ENCODE measurements at regions of chr11 and their contacts with region 1.

Region 1: DNA sequence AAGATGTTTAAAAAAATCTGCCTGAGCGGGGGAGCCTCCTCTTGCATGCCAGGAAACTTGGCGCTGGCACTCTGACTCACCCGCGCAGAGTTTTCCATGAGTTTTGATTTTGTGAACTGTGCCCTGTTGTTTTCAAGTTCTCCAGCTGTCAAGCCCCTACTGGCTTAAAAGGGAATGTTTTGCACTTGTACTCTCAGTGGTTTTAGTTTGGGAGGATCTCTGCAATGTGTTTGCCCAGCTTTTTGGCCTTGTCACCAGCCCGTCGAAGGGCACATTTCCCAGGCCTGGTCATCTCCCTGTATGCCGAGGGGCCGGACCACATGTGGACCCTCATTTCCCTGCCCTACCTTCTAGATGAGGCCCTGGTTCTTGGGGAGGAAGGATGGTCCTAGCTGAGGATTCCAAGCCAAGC is 12.2 kb downstream of the MRGPRF start:
- DNase-seq: no peak
- H3K4me3 ChIP-seq: no peak overlapping the region
- H3K27ac ChIP-seq: peak overlapping the region; percentile 82
- H3K4me1 ChIP-seq: peaks cover 72% of the 10 kb centered on the region
- H3K27me3 ChIP-seq: no peaks in the 10 kb centered on the region
- CTCF ChIP-seq: peak in 2 of 3 experiments; percentile 27 to 74
- POLR2A ChIP-seq: no peak

Region 2: DNA sequence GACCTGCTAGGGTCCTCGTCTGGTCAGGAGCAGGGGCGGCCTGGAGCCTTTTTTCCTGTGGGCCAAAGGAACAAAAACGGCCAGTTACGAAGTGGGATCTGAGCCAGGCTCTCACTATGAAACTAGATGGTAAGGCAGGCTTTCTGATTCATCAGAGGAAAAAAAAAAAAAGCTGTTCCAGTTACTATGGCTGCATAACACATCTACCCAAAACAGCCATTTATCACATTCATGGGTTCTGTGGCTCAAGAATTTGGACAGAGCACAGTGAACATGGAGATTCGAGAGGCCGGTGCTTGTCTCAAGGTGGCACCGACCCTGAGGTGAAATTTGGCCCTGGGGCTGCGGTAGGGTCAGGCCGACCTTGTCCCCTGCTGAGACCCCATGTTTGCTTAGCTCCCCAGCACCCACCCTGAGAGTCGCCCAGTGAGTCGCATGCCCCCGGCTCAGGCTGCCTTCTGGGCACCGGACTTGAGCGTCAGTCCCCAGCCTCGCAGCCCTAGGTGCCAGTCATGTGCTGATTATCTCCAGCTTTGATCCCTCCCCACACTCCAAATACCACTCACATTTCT is 54.3 kb before region 1 on chr11:
- intact Hi-C with region 1: loop called (anchors 5 kb)
- DNase-seq: no peak
- H3K4me3 ChIP-seq: no peak overlapping the region
- H3K27ac ChIP-seq: peak overlapping the region; percentile 39
- H3K4me1 ChIP-seq: peaks cover 15% of the 10 kb centered on the region
- H3K27me3 ChIP-seq: no peaks in the 10 kb centered on the region
- CTCF ChIP-seq: no peak
- POLR2A ChIP-seq: no peak